ENCODE measurements at regions of chr5 and their contacts with region 1.

Region 1: GRCh38 chr5:124576848-124577409 is 169.5 kb downstream of the ZNF608 start:
- DNase-seq: no peak
- H3K4me3 ChIP-seq: no peak overlapping the region
- H3K27ac ChIP-seq: peak overlapping the region in 57 of 59 donors; percentile 1 to 97 (median 89)
- H3K27me3 ChIP-seq: no peaks in the 10 kb centered on the region
- CTCF ChIP-seq: no peak

Region 2: DNA sequence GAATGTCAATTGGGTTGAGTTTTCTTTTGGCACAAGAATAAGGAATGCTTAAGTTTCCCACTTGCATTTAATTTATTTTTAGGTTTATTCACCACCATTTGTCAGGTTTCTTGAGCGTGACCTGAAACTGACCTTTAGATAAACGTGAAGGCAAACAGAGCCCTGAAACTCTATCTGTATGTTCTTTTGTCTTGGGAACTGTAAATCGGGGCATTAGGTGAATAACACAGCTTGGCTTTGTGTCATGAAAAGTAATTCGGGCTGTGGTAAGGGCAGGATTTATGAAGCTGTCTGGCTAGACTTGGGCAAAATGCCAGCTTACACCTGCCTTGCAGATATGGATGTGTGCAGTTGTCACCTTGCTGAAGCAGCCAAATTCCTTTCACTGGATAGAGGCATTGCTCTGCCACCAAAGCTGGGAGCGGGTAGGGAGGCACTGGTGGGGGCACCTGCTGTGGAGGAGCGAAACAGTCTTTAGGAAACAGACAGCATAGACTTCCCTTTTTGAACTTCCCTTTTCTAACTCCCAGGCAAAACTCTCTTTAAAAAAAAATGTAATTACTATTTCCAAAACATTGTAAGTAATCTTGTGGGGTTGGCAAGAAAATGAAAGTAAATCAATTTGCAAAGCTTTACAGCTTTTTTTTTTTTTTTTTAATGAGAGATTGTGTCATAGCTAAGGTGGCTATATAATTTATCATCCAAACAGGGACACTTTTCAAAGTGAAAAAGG is 519.8 kb before region 1 on chr5:
- intact Hi-C with region 1: loop called in 1 of 2 experiments (anchors 10 kb)
- DNase-seq: peak in 1 of 10 donors; percentile 29
- H3K4me3 ChIP-seq: peak overlapping the region in 43 of 59 donors; percentile 1 to 54 (median 26)
- H3K27ac ChIP-seq: peak overlapping the region in 20 of 59 donors; percentile 3 to 68 (median 36)
- H3K27me3 ChIP-seq: no peaks in the 10 kb centered on the region
- CTCF ChIP-seq: no peak

Region 3: DNA sequence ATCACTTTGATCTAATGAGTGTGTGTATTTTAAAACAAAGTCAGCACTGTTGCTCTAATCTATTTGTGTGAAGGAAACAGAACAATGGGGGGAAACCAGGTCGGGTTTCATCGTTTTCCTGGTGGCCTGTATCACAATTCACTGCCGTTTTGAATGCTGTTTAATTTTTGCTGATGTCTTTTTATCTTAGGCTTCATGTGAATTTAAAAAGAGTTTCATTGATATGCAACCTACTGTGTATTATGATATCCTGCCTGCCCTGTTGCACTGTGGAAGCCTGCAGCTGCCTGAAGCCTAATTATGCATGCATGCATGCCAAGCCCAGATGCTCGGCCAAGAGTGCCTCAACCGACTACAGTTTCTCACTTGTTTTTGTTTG is 138.0 kb before region 1 on chr5:
- intact Hi-C with region 1: loop called in 1 of 2 experiments (anchors 10 kb)
- DNase-seq: peak in 9 of 10 donors; percentile 53 to 88 (median 75)
- H3K4me3 ChIP-seq: peak overlapping the region in 28 of 59 donors; percentile 2 to 58 (median 36)
- H3K27ac ChIP-seq: peak overlapping the region; percentile 52 to 97 (median 90)
- H3K27me3 ChIP-seq: no peaks in the 10 kb centered on the region
- CTCF ChIP-seq: peak in 3 of 56 donors; percentile 5 to 11 (median 8)

Region 4: GRCh38 chr5:124461941-124462340 is 115.0 kb before region 1 on chr5:
- intact Hi-C with region 1: loop called in 1 of 2 experiments (anchors 10 kb)
- DNase-seq: no peak
- H3K4me3 ChIP-seq: peak overlapping the region in 23 of 59 donors; percentile 1 to 41 (median 15)
- H3K27ac ChIP-seq: peak overlapping the region in 58 of 59 donors; percentile 47 to 92 (median 80)
- H3K27me3 ChIP-seq: no peaks in the 10 kb centered on the region
- CTCF ChIP-seq: no peak